ENCODE measurements at regions of chr1 and their contacts with region 1.

Region 1: GRCh38 chr1:186212544-186213226 is 162.4 kb downstream of the TPR start:
- DNase-seq: peak in 4 of 10 donors; percentile 10 to 30 (median 16)

Region 2: GRCh38 chr1:185720633-185721272 is 491.9 kb before region 1 on chr1:
- intact Hi-C with region 1: loop called (anchors 2 kb)
- DNase-seq: no peak

Region 3: GRCh38 chr1:185813401-185813979 is 399.2 kb before region 1 on chr1:
- intact Hi-C with region 1: loop called (anchors 2 kb)
- DNase-seq: no peak

Region 4: DNA sequence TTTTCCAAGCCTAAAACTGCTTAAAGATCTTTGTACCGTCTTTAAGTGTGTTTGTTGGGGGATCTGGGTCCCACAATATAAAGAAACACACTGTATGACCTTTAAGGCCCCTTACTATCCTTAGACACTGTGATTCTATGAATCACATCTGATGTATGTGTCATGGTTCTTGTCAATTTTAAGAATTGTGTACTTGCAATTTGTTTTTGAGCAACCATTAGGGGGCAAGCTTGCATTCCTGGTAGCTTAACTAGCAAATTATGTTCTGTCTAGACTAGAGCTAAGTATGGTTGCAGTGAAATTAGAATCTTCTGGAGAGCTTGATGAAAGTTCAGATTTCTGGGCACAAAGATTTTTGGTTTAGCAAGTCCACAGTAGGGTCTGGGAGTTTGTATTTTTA is 57.1 kb before region 1 on chr1:
- intact Hi-C with region 1: loop called (anchors 5 kb)
- DNase-seq: no peak

Measured in posterior cingulate gyrus (tissue), 11 donors.